Left ventricle myocardium superior (tissue), 1 donor: ENCODE measurements at regions of chr15 and their contacts with region 1.

Region 1: GRCh38 chr15:57758560-57758959 is 52.0 kb downstream of the POLR2M start:
- DNase-seq: no peak
- ATAC-seq: no peak

Region 2: DNA sequence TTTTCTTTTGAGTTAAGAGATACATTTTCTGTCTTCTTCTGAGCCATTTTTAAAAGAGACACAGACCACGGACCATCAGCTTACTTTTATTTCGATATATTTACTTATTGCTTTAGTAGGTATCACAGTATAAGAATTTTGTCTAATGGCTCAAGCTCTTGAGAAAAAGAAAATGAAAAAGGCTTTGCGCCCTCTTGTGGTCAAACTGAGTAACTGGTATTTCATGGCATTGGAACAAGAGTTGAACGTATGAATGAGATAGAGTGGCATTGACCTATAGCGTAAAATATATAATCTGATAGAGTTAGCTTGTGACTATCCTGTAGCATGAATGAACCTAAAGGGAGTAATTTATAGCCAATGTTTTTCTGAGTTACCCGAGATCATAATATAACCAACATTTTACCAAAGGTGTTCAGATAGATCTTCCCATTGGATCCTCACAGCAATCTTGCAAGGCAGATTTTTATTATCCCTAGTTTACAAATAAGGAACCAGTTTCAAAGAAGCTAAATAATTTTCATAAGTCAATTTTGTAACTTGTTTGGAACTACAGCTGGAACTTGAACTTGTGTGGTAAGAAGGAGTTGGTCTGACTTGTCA is 102.6 kb after region 1 on chr15:
- intact Hi-C with region 1: loop called (anchors 5 kb)
- DNase-seq: no peak
- ATAC-seq: peak; percentile 52

Region 3: DNA sequence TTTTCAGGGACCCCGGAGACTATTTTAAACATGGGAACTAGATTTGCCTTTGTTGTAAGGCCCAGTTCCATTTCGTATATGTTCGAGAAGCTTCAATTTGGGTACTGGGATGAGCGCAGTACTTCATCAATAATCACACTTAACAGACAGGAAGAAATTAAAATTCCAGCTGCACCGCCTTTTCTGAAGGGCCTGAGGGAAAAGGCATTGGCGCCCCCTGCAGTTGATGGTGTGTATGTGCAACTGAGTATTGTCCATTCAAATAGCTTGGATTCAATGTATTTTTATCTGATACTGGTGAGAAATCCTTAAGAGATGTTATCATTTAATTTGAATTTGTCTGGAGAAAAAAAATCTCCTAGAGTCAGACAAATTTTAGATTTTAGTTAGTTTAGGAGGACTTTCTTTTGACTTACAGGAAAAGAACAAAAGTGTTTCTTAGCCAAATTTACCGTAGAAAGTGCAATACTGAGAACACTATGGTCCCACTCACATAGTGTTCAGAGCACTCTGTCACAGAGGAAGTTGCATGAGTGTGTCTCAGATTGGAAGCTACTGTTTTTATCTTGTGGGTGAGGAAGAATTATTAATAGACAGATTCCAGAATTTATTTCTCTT is 312.4 kb after region 1 on chr15:
- intact Hi-C with region 1: loop called (anchors 5 kb)
- DNase-seq: peak; percentile 65
- ATAC-seq: no peak